Activated CD8-positive, alpha-beta T cell treated with anti-CD3 and anti-CD28 coated beads for 36 hours (primary cell): ENCODE measurements at regions of chr11 and their contacts with region 1.

Region 1: GRCh38 chr11:75399344-75400145 is at the start of gene RPS3:
- DNase-seq: peak; percentile 93
- ATAC-seq: peak; percentile 91
- H3K4me3 Mint-ChIP-seq: peak within 1 kb of the TSS; percentile 100
- H3K27ac Mint-ChIP-seq: peak within 1 kb of the TSS; percentile 99
- H3K4me1 Mint-ChIP-seq: peaks cover 43% of the 10 kb centered on the region
- H3K27me3 Mint-ChIP-seq: no peaks in the 10 kb centered on the region
- CTCF ChIP-seq: no peak
- total RNA-seq, gene RPS3: 4,906 to 4,954 TPM

Region 2: DNA sequence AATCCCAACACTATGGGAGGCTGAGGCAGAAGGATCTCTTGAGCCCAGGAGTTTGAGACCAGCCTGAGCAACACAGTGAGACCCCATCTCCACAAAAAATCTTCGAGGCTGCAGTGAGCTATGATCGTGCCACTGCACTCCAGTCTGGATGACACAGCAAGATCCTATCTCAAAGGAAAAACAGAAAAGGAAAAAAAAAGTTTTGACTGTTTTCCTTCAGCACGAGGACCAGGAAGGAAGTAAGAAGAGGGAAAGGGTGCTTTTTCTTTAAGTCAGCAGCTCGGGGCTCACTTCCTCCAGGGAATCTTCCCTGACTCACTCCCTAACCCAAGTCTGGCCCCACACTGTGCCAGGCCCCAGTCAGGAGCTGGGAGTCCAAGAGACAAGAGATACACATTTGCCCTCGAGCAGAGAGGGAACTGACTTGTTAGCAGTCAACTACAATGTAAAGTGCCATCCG is 62.3 kb before region 1 on chr11:
- CTCF ChIA-PET with region 1: no interaction called
- POLR2A ChIA-PET with region 1: interaction called, 17 read pairs
- intact Hi-C with region 1: no loop called
- DNase-seq: no peak
- ATAC-seq: no peak
- H3K4me3 Mint-ChIP-seq: no peak overlapping the region
- H3K27ac Mint-ChIP-seq: peak overlapping the region; percentile 5
- H3K4me1 Mint-ChIP-seq: peaks cover 81% of the 10 kb centered on the region
- H3K27me3 Mint-ChIP-seq: no peaks in the 10 kb centered on the region
- CTCF ChIP-seq: no peak

Region 3: DNA sequence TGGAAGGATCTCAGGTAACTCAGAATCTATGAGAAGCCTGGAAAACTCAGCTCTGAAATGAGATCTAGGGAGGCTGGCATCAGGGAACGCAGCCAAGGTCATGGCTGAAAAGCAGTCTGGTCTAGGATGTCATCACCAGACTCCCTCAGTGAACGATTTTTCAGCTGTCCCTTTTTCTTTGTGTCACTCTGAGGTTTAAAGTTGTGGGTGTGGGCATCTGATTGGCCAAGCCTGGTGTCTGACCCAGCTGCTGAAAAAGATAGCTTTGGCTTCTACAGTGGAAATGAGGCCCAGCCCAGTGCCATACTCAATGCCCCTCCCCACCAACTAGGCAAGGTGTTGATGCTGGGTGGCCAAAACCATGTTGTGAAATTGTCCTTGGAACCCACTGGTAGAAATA is 14.3 kb after region 1 on chr11:
- CTCF ChIA-PET with region 1: interaction called, 9 read pairs
- POLR2A ChIA-PET with region 1: interaction called, 24 read pairs
- intact Hi-C with region 1: no loop called
- DNase-seq: no peak
- ATAC-seq: no peak
- H3K4me3 Mint-ChIP-seq: no peak overlapping the region
- H3K27ac Mint-ChIP-seq: no peak overlapping the region
- H3K4me1 Mint-ChIP-seq: no peaks in the 10 kb centered on the region
- H3K27me3 Mint-ChIP-seq: no peaks in the 10 kb centered on the region
- CTCF ChIP-seq: no peak